ENCODE measurements at regions of chr17 and their contacts with region 1.

Region 1: GRCh38 chr17:59155439-59156182 is at the start of gene PRR11:
- DNase-seq: peak; percentile 97
- H3K4me3 Mint-ChIP-seq: no peak within 1 kb of the TSS
- H3K27ac Mint-ChIP-seq: no peak within 1 kb of the TSS
- H3K4me1 Mint-ChIP-seq: peaks cover 37% of the 10 kb centered on the region
- H3K27me3 Mint-ChIP-seq: no peaks in the 10 kb centered on the region
- total RNA-seq, gene PRR11: 67.3 to 70.2 TPM

Region 2: DNA sequence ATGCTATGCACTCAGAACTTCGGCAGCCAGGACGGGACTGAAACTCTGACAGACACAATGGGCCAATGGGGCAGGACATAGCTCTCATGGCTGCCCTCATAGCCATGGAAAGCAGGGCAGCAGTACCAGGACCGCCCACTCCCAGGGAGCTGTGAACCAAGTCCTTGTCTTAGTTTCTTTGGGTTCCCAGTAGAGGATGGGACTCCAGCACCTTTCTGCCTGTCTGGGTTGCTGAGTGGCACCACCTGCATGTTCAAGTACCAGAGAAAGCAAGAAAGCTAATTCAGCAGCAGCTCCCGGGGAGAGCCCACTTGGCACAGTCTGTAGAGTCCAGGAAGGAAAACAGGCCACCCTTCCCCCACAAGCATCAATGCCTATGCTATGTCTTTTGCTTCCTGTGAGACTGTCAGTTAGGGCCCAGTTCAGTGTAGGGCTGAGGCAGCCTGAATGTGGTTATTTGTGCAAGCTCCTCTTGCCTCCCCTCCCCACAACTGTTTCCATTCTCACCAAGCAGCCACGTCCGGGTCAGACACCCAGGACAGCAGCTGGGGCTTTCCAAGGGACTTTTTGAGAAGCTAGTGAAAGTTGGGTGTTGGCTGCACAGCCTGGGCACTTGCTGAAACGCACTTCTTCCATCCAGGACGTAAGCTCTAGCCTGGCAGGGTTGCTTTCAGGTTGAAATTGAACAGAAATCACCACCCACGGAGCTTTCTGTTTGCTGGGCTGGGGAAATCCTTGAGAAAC is 811.4 kb before region 1 on chr17:
- CTCF ChIA-PET with region 1: no interaction called
- POLR2A ChIA-PET with region 1: no interaction called
- intact Hi-C with region 1: loop called (anchors 5 kb)
- DNase-seq: peak; percentile 97
- H3K4me3 Mint-ChIP-seq: peak overlapping the region; percentile 92
- H3K27ac Mint-ChIP-seq: peak overlapping the region; percentile 98
- H3K4me1 Mint-ChIP-seq: peaks cover 56% of the 10 kb centered on the region
- H3K27me3 Mint-ChIP-seq: no peaks in the 10 kb centered on the region

Region 3: GRCh38 chr17:59220376-59221158 is 65.0 kb after region 1 on chr17 and contains the start of gene GDPD1:
- CTCF ChIA-PET with region 1: no interaction called
- POLR2A ChIA-PET with region 1: interaction called, 7 read pairs
- intact Hi-C with region 1: loop called (anchors 2 kb)
- DNase-seq: peak; percentile 98
- H3K4me3 Mint-ChIP-seq: peak within 1 kb of the TSS; percentile 100
- H3K27ac Mint-ChIP-seq: peak within 1 kb of the TSS; percentile 80
- H3K4me1 Mint-ChIP-seq: peaks cover 13% of the 10 kb centered on the region
- H3K27me3 Mint-ChIP-seq: no peaks in the 10 kb centered on the region
- total RNA-seq, gene GDPD1: 2.9 to 3.5 TPM

Measured in activated CD4-positive, alpha-beta memory T cell treated with anti-CD3 and anti-CD28 coated beads for 36 hours (primary cell).